Testis (tissue), 5 donors: ENCODE measurements at regions of chr15 and their contacts with region 1.

Region 1: DNA sequence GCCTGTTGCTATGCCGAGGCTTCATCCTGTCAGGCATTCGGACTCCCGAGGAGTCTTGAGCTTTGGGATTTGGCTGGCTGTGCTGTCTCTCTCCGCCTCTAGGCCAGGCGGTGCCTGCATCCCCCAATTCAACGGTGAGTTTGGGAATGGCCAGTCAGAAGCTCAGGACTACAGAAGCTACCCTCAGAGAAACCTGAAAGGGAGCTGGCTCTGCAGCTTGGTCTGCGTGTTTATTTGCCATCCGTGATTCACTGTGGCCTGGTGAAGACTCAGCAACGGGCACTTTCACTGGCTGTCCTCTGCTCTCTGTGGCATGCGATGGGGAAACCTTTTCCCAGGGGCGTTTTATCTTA is 103.2 kb upstream of the KLHL25 start:
- DNase-seq: no peak
- H3K4me3 ChIP-seq: no peak overlapping the region
- H3K27ac ChIP-seq: no peak overlapping the region
- H3K4me1 ChIP-seq: peaks cover 11% of the 10 kb centered on the region
- H3K27me3 ChIP-seq: no peaks in the 10 kb centered on the region
- CTCF ChIP-seq: no peak
- POLR2A ChIP-seq: no peak

Region 2: DNA sequence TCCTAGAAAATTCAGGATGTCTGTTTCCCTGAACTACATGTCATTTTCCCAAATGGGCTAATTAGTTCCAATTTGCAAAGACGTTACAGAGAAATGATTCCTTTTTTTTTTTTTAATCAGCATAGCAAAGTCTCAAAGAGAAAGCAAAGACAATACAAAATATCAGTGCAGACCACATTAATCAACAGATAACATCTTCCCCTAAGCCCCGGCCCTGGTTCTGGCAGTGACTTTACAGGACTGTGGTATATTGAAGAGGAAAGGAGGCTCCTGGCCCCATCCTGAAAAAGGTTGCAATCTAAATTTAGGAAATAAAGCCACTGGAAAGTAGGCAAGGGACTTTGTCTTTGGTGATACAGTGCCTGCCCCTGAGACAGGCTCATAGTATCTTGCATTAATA is 1522.1 kb after region 1 on chr15:
- intact Hi-C with region 1: loop called (anchors 10 kb)
- DNase-seq: no peak
- H3K4me3 ChIP-seq: no peak overlapping the region
- H3K27ac ChIP-seq: no peak overlapping the region
- H3K4me1 ChIP-seq: no peaks in the 10 kb centered on the region
- H3K27me3 ChIP-seq: no peaks in the 10 kb centered on the region
- CTCF ChIP-seq: no peak
- POLR2A ChIP-seq: no peak